Caco-2 (cell line): ENCODE measurements at regions of chr14 and their contacts with region 1.

Region 1: GRCh38 chr14:87896393-87897380 is 96.3 kb downstream of the GALC start:
- DNase-seq: peak in 1 of 2 experiments; percentile 46
- H3K4me3 ChIP-seq: no peak overlapping the region
- H3K4me3 Mint-ChIP-seq: no peak overlapping the region
- H3K27ac Mint-ChIP-seq: no peak overlapping the region
- H3K4me1 ChIP-seq: no peaks in the 10 kb centered on the region
- H3K4me1 Mint-ChIP-seq: no peaks in the 10 kb centered on the region
- H3K27me3 ChIP-seq: no peaks in the 10 kb centered on the region; the same call in 1 of the 2 replicates
- H3K27me3 Mint-ChIP-seq: peaks cover 16% of the 10 kb centered on the region
- CTCF ChIP-seq: peak; percentile 55 to 65

Region 2: DNA sequence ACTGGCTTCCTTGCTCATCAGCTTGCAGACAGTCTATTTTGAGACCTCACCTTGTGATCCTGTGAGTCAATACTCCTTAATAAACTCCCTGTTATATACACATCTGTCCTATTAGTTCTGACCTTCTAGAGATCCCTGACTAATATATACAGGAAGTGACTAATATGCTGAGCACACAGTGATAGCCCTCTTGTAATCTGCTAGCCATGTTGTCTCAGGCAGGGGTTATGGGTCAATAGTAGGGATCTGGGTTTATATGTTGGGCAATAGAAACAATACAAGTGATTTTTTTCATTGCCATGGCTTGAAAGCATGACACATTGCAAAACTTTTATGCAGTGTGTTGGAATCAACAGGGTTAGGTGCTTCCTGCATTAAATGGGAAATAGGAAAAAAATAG is 465.9 kb before region 1 on chr14:
- CTCF ChIA-PET with region 1: no interaction called
- POLR2A ChIA-PET with region 1: no interaction called
- intact Hi-C with region 1: no loop called
- DNase-seq: no peak
- H3K4me3 ChIP-seq: no peak overlapping the region
- H3K4me3 Mint-ChIP-seq: no peak overlapping the region
- H3K27ac Mint-ChIP-seq: no peak overlapping the region
- H3K4me1 ChIP-seq: peaks cover 10% of the 10 kb centered on the region
- H3K4me1 Mint-ChIP-seq: no peaks in the 10 kb centered on the region
- H3K27me3 ChIP-seq: no peaks in the 10 kb centered on the region
- H3K27me3 Mint-ChIP-seq: no peaks in the 10 kb centered on the region
- CTCF ChIP-seq: no peak

Region 3: GRCh38 chr14:87615822-87616679 is 280.6 kb before region 1 on chr14:
- CTCF ChIA-PET with region 1: no interaction called
- POLR2A ChIA-PET with region 1: no interaction called
- intact Hi-C with region 1: loop called (anchors 1 kb)
- DNase-seq: peak; percentile 62 to 69
- H3K4me3 ChIP-seq: no peak overlapping the region
- H3K4me3 Mint-ChIP-seq: no peak overlapping the region
- H3K27ac Mint-ChIP-seq: no peak overlapping the region
- H3K4me1 ChIP-seq: no peaks in the 10 kb centered on the region
- H3K4me1 Mint-ChIP-seq: no peaks in the 10 kb centered on the region
- H3K27me3 ChIP-seq: no peaks in the 10 kb centered on the region
- H3K27me3 Mint-ChIP-seq: peaks cover 2% of the 10 kb centered on the region
- CTCF ChIP-seq: peak; percentile 72 to 73

Region 4: DNA sequence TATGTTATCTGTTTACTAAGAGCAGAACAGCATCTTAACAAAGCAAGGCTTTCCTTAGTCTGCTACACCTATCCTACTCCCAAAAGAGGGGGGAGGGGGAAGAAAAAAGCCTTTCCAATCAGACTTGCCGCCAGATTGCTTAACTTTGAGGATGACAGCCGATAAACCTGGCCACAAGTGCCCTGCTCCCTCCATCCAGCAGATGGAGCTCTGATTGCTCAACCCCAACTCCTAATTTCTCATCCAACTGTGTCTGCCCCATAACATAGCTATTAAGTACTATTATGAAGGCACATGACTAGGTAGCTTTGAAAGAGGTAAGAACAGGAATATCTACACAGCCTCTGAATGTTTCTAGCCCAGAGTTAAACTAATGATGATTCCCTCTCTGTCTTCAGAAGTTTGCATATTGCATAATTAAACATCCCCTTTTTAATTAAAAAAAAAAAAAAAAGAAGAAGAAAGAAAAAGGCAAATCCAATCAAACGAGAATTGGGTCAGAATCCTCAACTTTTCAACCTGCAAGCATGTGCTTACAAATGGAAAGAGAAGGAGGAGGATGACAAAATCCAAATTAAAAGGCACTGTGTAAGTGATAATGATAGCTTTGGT is 151.1 kb before region 1 on chr14:
- CTCF ChIA-PET with region 1: interaction called, 9 read pairs
- POLR2A ChIA-PET with region 1: no interaction called
- intact Hi-C with region 1: loop called (anchors 1 kb)
- DNase-seq: peak; percentile 45 to 59
- H3K4me3 ChIP-seq: no peak overlapping the region
- H3K4me3 Mint-ChIP-seq: no peak overlapping the region
- H3K27ac Mint-ChIP-seq: no peak overlapping the region
- H3K4me1 ChIP-seq: no peaks in the 10 kb centered on the region
- H3K4me1 Mint-ChIP-seq: no peaks in the 10 kb centered on the region
- H3K27me3 ChIP-seq: no peaks in the 10 kb centered on the region
- H3K27me3 Mint-ChIP-seq: peaks cover 6% of the 10 kb centered on the region
- CTCF ChIP-seq: peak; percentile 72 to 86

Region 5: DNA sequence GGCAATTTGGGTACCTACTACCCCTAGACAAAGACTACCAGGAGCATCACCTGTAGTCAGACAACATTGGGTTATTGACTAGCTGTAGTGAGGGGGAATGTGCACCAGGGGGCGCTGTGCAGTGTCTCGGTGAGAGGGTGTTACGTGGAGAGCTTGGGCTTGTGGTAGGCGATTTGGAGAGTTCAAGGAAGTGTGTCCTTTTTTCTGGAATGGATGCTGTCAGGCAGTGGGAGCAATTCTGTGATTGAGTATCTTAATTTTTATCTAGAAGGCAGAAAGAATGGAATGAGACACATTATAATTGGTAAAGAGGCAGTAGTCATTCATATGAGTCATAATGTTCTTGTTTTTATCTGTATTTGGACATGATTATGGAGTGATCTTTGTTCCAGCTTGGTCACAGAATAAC is 91.4 kb before region 1 on chr14:
- CTCF ChIA-PET with region 1: interaction called, 4 read pairs
- POLR2A ChIA-PET with region 1: no interaction called
- intact Hi-C with region 1: loop called (anchors 1 kb)
- DNase-seq: peak; percentile 41 to 68
- H3K4me3 ChIP-seq: no peak overlapping the region
- H3K4me3 Mint-ChIP-seq: no peak overlapping the region
- H3K27ac Mint-ChIP-seq: no peak overlapping the region
- H3K4me1 ChIP-seq: no peaks in the 10 kb centered on the region
- H3K4me1 Mint-ChIP-seq: no peaks in the 10 kb centered on the region
- H3K27me3 ChIP-seq: no peaks in the 10 kb centered on the region
- H3K27me3 Mint-ChIP-seq: peaks cover 2% of the 10 kb centered on the region
- CTCF ChIP-seq: peak; percentile 55 to 62